Left colon (tissue), 2 donors: ENCODE measurements at regions of chr13 and their contacts with region 1.

Region 1: DNA sequence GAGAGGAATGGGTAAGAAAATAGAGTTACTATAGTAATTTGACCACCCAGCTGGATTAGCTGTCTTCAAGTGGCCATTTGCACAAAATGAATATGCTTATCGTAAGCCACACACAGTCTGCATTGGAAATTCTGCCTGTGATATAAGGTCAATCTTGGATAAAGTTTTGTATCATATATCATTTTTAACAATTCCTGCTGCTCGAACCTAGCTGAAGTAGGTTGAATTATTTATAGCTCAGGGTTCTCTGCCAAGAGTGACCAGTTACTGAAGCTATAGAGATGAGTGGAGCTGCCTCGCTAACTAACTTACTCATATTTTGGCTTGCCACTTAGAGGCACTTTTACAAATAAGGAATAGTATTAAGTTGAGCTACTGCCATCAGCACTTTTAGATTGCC is 220.9 kb downstream of the RGCC start:
- DNase-seq: no peak
- ATAC-seq: no peak

Region 2: GRCh38 chr13:41533266-41534052 is 144.8 kb before region 1 on chr13:
- intact Hi-C with region 1: no loop called
- DNase-seq: no peak
- ATAC-seq: no peak

Region 3: GRCh38 chr13:42102961-42103865 is 425.0 kb after region 1 on chr13:
- intact Hi-C with region 1: loop called in 1 of 2 experiments (anchors 10 kb)
- DNase-seq: no peak
- ATAC-seq: no peak